Lower leg skin (tissue), 4 donors: ENCODE measurements at regions of chr6 and their contacts with region 1.

Region 1: DNA sequence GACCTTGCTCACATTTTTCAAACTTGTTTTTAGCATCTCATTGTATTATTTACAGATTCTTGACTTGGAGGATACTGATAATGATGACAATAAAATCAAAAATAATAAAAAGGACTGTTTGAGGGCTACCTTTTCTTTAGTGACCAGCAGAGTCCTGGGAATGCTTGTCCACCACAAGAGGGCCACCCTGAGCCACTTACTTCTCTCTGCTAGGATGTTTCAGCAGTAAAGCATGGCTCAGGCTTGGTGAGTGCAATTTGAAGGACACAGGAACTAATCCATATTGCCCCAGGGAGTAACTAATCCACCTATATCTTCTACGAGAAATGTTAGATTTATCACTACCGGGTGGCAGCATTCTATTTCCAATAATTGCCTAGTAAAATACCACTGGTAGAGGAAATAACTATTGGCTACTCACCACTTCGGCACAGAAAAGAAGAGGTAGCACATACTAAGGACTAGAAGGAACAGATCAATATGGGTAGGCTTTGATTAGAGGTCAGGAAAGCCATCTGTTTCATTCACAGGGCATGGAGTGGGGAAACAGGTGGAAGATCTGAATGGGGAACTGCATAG is 5.8 kb upstream of the KIAA0408 start:
- DNase-seq: peak; percentile 58 to 88
- H3K4me3 ChIP-seq: no peak overlapping the region
- CTCF ChIP-seq: no peak
- POLR2A ChIP-seq: no peak

Region 2: DNA sequence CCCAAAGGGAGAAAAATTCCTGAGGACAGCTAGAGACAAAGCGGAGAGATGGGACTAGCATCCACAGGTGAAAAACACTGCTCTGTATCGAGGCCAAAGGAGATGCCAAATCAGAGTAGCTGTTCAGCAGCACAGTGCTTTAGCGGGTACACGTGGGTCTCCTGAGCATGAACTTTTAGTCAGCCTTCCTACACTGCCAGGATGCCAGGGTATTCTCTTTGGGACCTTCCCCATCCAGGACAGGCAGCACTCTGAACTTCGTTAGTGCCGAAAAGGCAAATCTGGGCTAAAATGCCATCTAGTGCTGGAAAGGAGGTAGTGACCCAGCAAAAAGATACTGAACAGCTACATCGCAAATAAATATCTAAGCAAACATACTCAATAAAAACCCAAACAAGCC is 176.9 kb after region 1 on chr6:
- intact Hi-C with region 1: loop called (anchors 10 kb)
- DNase-seq: no peak
- H3K4me3 ChIP-seq: no peak overlapping the region
- CTCF ChIP-seq: no peak
- POLR2A ChIP-seq: no peak